ENCODE measurements at regions of chr5 and their contacts with region 1.

Region 1: GRCh38 chr5:61277190-61277589 is 54.9 kb upstream of the ZSWIM6 start:
- DNase-seq: no peak
- H3K4me3 ChIP-seq: peak overlapping the region in 2 of 3 experiments; percentile 24 to 67
- H3K4me3 Mint-ChIP-seq: peak overlapping the region; percentile 70 to 88
- H3K27ac ChIP-seq: peak overlapping the region; percentile 94 to 95
- H3K27ac Mint-ChIP-seq: no peak overlapping the region
- H3K4me1 ChIP-seq: peaks cover 87 to 94% of the 10 kb centered on the region in 2 donors
- H3K4me1 Mint-ChIP-seq: peaks cover 18% of the 10 kb centered on the region
- H3K27me3 ChIP-seq: no peaks in the 10 kb centered on the region
- H3K27me3 Mint-ChIP-seq: peaks cover 0 to 6% (median 0%) of the 10 kb centered on the region in 3 donors
- CTCF ChIP-seq: no peak

Region 2: GRCh38 chr5:61162010-61162831 is 115.0 kb before region 1 on chr5 and contains the start of gene SMIM15:
- intact Hi-C with region 1: loop called in 1 of 2 experiments (anchors 5 kb)
- DNase-seq: peak; percentile 94 to 95 (median 94)
- H3K4me3 ChIP-seq: peak within 1 kb of the TSS; percentile 59 to 96 (median 86)
- H3K4me3 Mint-ChIP-seq: peak within 1 kb of the TSS; percentile 99
- H3K27ac ChIP-seq: peak within 1 kb of the TSS; percentile 93 to 96
- H3K27ac Mint-ChIP-seq: peak within 1 kb of the TSS; percentile 97 to 99 (median 98)
- H3K4me1 ChIP-seq: peaks cover 27 to 44% of the 10 kb centered on the region in 2 donors
- H3K4me1 Mint-ChIP-seq: peaks cover 52% of the 10 kb centered on the region
- H3K27me3 ChIP-seq: no peaks in the 10 kb centered on the region
- H3K27me3 Mint-ChIP-seq: peaks cover 0 to 2% (median 0%) of the 10 kb centered on the region in 3 donors
- CTCF ChIP-seq: no peak
- polyA plus RNA-seq, gene SMIM15: 7.0 to 43.4 (median 32.0) TPM

Measured in CD14-positive monocyte (primary cell).